Pancreas (tissue), 10 donors: ENCODE measurements at regions of chr16 and their contacts with region 1.

Region 1: GRCh38 chr16:70470927-70471341 is 16.5 kb downstream of the FCSK start:
- DNase-seq: peak in 4 of 6 donors; percentile 18 to 80 (median 48)
- ATAC-seq: peak; percentile 33 to 85 (median 64)
- H3K4me3 ChIP-seq: no peak overlapping the region
- H3K27ac ChIP-seq: no peak overlapping the region
- H3K4me1 ChIP-seq: no peaks in the 10 kb centered on the region
- H3K27me3 ChIP-seq: no peaks in the 10 kb centered on the region
- CTCF ChIP-seq: no peak

Region 2: DNA sequence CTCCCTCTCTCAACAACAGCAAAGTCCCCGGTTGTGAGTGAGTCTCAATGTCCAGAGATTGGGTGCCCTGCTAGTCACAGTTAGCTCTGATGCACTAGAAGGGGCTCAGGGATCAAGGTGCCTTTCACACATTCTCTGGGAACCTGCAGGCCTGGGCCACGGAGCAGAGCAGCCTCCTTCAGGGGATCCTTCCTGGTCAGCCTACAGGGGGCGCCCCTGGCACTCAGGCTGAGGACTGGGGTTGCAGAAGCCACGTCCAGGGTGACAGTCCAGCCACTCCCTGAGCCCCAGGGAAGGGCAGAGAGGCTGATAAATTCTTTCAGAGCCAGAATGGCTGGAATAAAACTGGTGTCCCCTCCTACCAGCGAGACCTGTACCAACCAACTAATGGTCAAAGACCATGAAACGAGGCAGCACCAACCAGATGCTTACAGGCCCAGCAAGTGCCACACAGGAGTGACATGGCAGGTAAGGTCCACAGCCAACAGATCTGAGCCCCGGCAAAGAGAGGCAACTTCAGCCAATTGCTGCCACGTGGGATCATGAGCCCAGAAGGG is 75.5 kb before region 1 on chr16:
- intact Hi-C with region 1: loop called in 2 of 3 experiments (anchors 5 to 10 kb)
- DNase-seq: peak; percentile 56 to 94 (median 78)
- ATAC-seq: peak; percentile 87 to 98 (median 92)
- H3K4me3 ChIP-seq: no peak overlapping the region
- H3K27ac ChIP-seq: no peak overlapping the region
- H3K4me1 ChIP-seq: no peaks in the 10 kb centered on the region
- H3K27me3 ChIP-seq: no peaks in the 10 kb centered on the region
- CTCF ChIP-seq: peak; percentile 55 to 71 (median 65)

Region 3: DNA sequence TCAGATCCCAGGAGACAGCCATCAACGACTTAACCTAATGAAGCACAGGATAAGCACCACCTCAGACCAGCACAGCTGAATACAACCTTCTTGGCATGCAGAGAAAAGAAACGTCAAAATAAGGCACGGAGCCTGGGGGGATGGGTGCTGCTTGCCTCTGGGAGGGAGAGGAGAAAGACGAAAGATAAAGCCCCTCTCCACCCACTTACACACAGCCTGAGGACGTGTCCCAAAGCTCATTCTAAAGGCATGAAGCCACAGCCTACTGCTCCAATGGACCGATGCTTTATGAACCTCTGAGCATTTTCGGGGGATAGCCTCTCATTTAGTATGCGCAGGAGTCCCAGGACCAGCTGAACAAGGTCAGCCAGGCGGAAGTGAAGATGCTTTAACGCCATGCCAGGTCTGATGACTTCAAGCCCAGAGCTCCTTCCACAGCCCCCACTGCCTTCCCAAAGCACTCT is 63.1 kb before region 1 on chr16:
- intact Hi-C with region 1: no loop called
- DNase-seq: no peak
- ATAC-seq: no peak
- H3K4me3 ChIP-seq: no peak overlapping the region
- H3K27ac ChIP-seq: no peak overlapping the region
- H3K4me1 ChIP-seq: no peaks in the 10 kb centered on the region
- H3K27me3 ChIP-seq: no peaks in the 10 kb centered on the region
- CTCF ChIP-seq: no peak

Region 4: DNA sequence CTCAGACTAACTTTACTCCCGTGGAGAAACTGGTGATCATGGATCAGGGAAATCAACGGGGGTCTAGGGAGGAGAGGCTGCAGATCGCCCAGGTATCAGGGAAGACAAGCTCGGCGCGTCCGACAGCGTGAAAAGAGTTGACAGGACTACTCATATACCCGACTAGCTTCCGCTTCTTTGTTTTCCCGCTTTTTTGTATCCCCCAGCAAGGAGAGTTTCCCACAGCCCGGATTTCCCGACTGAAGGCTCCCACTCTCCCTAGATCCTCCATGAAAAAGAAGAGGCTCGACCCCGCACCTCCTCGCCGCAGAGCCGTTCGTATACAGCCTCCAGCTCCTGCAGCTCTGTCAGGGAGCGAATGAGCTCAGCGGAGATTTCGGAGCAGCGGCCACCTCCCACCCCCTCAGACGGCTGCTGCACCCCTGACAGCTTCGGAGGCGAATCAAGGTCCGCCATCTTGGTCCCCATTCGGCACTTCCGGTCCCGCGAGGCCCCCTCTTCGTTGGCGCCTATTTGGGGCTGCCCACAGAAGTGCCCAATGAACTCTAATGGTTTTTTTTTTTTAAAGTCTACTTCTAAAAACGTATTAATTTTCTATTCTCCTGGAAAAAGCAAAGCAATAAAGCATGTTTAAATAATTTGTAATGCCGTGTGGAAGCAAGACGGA is 52.3 kb after region 1 on chr16 and contains the start of gene COG4:
- intact Hi-C with region 1: no loop called
- DNase-seq: peak; percentile 81 to 91 (median 84)
- ATAC-seq: peak; percentile 93 to 95 (median 94)
- H3K4me3 ChIP-seq: peak within 1 kb of the TSS; percentile 65 to 90 (median 85)
- H3K27ac ChIP-seq: peak within 1 kb of the TSS; percentile 60 to 81 (median 74)
- H3K4me1 ChIP-seq: peaks cover 11 to 25% (median 24%) of the 10 kb centered on the region in 3 donors
- H3K27me3 ChIP-seq: no peaks in the 10 kb centered on the region
- CTCF ChIP-seq: no peak
- total RNA-seq, gene COG4: 12.3 to 36.2 (median 16.6) TPM